ENCODE measurements at regions of chr22 and their contacts with region 1.

Region 1: GRCh38 chr22:40818747-40819598 is at the start of gene SLC25A17:
- DNase-seq: peak; percentile 96
- ATAC-seq: peak; percentile 97
- total RNA-seq, gene SLC25A17: 3.1 TPM

Region 2: GRCh38 chr22:40709752-40710413 is 109.1 kb before region 1 on chr22:
- intact Hi-C with region 1: no loop called
- DNase-seq: peak; percentile 73
- ATAC-seq: peak; percentile 78

Region 3: DNA sequence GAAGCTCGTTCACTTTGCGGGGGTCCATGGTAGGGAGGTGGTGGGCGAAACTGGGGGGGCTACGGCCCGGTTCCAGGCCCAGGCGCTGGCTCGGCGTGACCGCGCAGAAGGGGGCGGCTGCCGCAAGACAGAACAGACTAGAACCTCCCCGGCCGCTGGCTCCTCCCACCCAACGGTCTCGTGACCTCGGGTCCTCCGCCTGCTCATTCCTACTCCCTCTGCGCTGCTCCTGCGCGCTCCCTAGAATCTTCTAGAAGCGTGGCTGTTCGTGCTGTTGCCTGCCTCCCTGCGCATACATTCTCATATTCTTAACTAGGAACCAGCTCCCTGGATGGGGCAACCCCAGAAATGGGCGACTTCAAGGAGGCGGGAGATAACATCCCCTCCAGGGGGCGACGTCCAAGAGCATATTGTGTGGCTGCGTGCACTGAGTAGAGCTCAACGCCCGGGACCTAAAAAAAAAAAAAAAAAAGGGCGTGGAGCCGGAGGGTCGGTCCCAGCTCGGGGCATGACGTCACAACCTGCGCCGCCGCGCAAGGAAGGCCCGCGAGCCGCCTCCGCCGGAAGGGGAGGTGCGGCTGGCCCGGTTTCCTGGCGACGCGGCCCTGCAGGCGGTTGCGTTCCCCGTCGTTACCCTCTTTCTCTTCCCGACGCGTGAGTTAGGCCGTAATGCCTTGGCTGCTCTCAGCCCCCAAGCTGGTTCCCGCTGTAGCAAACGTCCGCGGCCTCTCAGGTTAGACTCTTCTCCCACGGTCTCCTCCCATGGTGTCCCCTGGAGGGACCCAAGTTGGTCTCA is 37.7 kb after region 1 on chr22 and contains the starts of genes ST13 and XPNPEP3:
- intact Hi-C with region 1: loop called (anchors 5 kb)
- DNase-seq: peak; percentile 99
- ATAC-seq: peak; percentile 99
- total RNA-seq, gene ST13: 197 TPM
- total RNA-seq, gene XPNPEP3: 23.7 TPM

Region 4: GRCh38 chr22:40950962-40951794 is 132.2 kb after region 1 on chr22 and contains the start of gene RBX1:
- intact Hi-C with region 1: no loop called
- DNase-seq: peak; percentile 99
- ATAC-seq: peak; percentile 97
- total RNA-seq, gene RBX1: 74.1 TPM

Measured in Right ventricle myocardium inferior (tissue), 1 donor.